Right lobe of liver (tissue), 6 donors: ENCODE measurements at regions of chr10 and their contacts with region 1.

Region 1: GRCh38 chr10:110547139-110547761 is 20.2 kb upstream of the SMC3 start:
- DNase-seq: no peak
- ATAC-seq: peak; percentile 81 to 90 (median 86)
- H3K4me3 ChIP-seq: no peak overlapping the region
- H3K27ac ChIP-seq: no peak overlapping the region
- H3K4me1 ChIP-seq: no peaks in the 10 kb centered on the region
- H3K27me3 ChIP-seq: no peaks in the 10 kb centered on the region
- CTCF ChIP-seq: peak; percentile 73 to 91 (median 78)
- POLR2A ChIP-seq: no peak

Region 2: DNA sequence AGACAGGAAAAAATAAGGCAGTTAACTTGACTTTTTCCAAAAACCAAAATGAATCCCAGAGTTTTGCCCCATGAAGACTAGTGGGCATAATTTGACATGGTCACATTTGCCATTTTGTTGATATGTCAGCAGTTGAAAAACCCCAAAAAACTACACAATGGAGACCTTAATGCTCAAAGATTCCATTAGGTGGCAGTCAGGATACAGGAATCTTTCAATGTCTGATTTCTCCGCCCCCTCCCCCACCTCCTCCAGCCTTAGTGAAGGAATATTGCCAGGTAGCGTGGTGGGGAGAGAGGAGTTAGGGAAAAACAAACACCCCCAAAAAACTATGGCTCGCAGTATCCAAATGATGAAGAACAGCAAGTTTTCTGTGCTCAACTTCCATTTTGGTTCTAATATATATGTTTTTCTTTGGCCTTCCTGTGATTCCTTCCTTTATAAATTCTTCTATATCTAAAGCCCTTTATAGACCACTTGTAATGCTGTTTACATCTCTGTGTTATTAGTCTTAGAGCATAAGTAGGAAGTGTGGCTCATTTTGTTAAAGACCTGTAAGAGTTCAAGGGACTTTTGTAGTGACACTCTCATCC is 235.8 kb before region 1 on chr10:
- intact Hi-C with region 1: loop called in 1 of 2 experiments (anchors 5 kb)
- DNase-seq: peak in 1 of 3 donors; percentile 29
- ATAC-seq: peak; percentile 89 to 92 (median 90)
- H3K4me3 ChIP-seq: no peak overlapping the region
- H3K27ac ChIP-seq: no peak overlapping the region
- H3K4me1 ChIP-seq: no peaks in the 10 kb centered on the region
- H3K27me3 ChIP-seq: no peaks in the 10 kb centered on the region
- CTCF ChIP-seq: peak; percentile 60 to 74 (median 62)
- POLR2A ChIP-seq: no peak

Region 3: GRCh38 chr10:110354322-110354766 is 192.9 kb before region 1 on chr10:
- intact Hi-C with region 1: loop called in 1 of 2 experiments (anchors 10 kb)
- DNase-seq: peak; percentile 77 to 84 (median 79)
- ATAC-seq: peak; percentile 81 to 90 (median 84)
- H3K4me3 ChIP-seq: no peak overlapping the region
- H3K27ac ChIP-seq: no peak overlapping the region
- H3K4me1 ChIP-seq: peaks cover 0 to 3% (median 0%) of the 10 kb centered on the region in 4 donors
- H3K27me3 ChIP-seq: no peaks in the 10 kb centered on the region
- CTCF ChIP-seq: peak; percentile 73 to 84 (median 78)
- POLR2A ChIP-seq: no peak